Psoas muscle (tissue), 8 donors: ENCODE measurements at regions of chr2 and their contacts with region 1.

Region 1: GRCh38 chr2:121530212-121530705 is 421 bp upstream of the RNU4ATAC start:
- DNase-seq: peak; percentile 84 to 92
- ATAC-seq: peak; percentile 77 to 83 (median 78)
- H3K4me3 ChIP-seq: peak overlapping the region; percentile 89
- H3K27ac ChIP-seq: peak overlapping the region; percentile 99
- H3K4me1 ChIP-seq: peaks cover 44% of the 10 kb centered on the region
- H3K27me3 ChIP-seq: no peaks in the 10 kb centered on the region
- CTCF ChIP-seq: no peak

Region 2: DNA sequence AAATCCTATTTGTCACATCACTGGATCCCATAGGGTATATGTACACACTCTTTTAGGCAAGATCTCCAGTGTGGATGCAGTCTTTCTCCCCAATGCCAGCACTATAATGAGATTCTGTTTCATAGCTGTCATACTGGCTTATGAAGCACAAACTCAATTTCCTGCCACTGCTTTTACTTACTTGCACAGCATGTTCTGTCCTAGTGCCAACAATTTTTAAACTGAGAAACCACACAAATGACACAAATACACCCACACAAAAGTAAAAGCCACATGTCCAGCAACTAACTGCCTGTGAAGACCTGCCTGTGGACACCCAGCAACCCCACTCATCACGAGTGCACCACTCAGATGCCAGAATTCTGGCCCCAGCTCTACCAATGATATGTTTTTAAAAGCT is 29.2 kb before region 1 on chr2:
- intact Hi-C with region 1: no loop called
- DNase-seq: no peak
- ATAC-seq: peak in 3 of 4 donors; percentile 37 to 65 (median 42)
- H3K4me3 ChIP-seq: no peak overlapping the region
- H3K27ac ChIP-seq: peak overlapping the region; percentile 63
- H3K4me1 ChIP-seq: peaks cover 58% of the 10 kb centered on the region
- H3K27me3 ChIP-seq: no peaks in the 10 kb centered on the region
- CTCF ChIP-seq: no peak

Region 3: GRCh38 chr2:121565389-121566250 is 35.4 kb after region 1 on chr2:
- intact Hi-C with region 1: loop called (anchors 2 to 5 kb)
- DNase-seq: peak; percentile 37 to 68
- ATAC-seq: peak; percentile 89 to 91 (median 90)
- H3K4me3 ChIP-seq: peak overlapping the region; percentile 43
- H3K27ac ChIP-seq: peak overlapping the region; percentile 84
- H3K4me1 ChIP-seq: peaks cover 95% of the 10 kb centered on the region
- H3K27me3 ChIP-seq: no peaks in the 10 kb centered on the region
- CTCF ChIP-seq: no peak

Region 4: DNA sequence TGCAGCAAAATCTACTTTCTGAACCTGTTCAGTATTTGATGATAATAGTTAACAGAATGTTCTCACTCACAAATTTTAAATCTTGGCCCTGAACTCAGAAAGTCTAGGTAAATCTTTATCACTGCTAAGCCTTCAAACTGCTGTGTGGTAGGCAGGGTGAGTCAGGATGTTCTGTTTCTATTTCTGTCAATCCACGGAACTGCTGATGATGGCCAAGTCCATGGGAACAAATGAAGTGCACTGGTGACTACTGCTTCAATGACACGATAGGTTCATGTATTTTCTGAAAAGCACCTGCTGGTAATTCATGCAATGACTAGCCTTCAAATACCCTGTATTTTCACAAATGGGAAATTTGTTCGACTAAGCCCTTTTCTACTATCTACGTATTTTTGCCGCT is 192.2 kb after region 1 on chr2:
- intact Hi-C with region 1: loop called (anchors 2 to 5 kb)
- DNase-seq: no peak
- ATAC-seq: peak; percentile 85 to 93 (median 92)
- H3K4me3 ChIP-seq: no peak overlapping the region
- H3K27ac ChIP-seq: peak overlapping the region; percentile 75
- H3K4me1 ChIP-seq: peaks cover 19% of the 10 kb centered on the region
- H3K27me3 ChIP-seq: no peaks in the 10 kb centered on the region
- CTCF ChIP-seq: no peak

Region 5: DNA sequence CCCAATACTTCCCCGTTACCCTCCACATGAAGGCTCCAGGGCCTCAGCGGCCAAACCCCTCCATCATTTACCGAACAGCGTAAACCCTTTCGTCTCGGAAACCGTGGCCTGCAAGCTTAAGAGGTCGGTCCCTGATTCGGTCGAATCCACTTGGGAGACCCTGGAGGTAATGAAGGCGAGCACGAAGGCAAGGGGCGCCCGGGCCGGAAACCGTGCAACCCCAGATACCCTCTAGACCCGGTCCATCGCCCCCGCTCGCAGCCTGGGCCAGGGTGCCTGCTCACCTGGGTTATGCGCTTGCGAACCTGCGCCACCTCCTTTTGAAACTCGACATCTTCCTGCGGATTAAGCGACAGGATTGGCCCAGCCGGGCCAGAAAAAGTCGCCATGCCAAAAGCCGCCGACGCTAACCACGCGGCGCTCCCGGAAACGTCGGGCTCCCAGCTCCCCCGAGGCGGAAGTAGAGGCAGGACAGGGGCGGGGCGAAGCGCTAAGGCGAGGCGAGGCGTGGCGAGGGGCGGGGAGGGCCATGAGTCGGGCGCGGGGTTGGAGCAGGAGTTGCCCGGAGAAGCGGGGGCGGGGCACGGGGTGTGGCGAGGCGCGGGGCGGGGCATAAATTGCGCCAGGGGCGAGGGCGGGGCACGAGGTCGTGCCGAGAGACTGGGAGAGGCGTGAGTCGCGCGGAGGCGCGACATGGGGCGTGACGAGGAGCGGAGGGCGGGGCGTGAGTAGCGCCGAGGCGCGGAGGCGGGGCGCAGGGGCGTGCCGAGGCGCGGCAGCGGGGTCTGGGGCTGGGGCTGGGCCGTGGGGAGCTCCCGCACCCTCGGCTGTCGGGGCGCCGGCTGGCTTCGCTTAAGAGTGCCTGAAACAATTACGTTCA is 206.4 kb after region 1 on chr2 and contains the start of gene NIFK:
- intact Hi-C with region 1: loop called in 1 of 2 experiments (anchors 5 kb)
- DNase-seq: peak; percentile 100
- ATAC-seq: peak; percentile 98
- H3K4me3 ChIP-seq: peak within 1 kb of the TSS; percentile 99
- H3K27ac ChIP-seq: peak within 1 kb of the TSS; percentile 95
- H3K4me1 ChIP-seq: peaks cover 4% of the 10 kb centered on the region
- H3K27me3 ChIP-seq: no peaks in the 10 kb centered on the region
- CTCF ChIP-seq: no peak
- total RNA-seq, gene NIFK: 46.5 to 74.3 (median 56.6) TPM

Region 6: DNA sequence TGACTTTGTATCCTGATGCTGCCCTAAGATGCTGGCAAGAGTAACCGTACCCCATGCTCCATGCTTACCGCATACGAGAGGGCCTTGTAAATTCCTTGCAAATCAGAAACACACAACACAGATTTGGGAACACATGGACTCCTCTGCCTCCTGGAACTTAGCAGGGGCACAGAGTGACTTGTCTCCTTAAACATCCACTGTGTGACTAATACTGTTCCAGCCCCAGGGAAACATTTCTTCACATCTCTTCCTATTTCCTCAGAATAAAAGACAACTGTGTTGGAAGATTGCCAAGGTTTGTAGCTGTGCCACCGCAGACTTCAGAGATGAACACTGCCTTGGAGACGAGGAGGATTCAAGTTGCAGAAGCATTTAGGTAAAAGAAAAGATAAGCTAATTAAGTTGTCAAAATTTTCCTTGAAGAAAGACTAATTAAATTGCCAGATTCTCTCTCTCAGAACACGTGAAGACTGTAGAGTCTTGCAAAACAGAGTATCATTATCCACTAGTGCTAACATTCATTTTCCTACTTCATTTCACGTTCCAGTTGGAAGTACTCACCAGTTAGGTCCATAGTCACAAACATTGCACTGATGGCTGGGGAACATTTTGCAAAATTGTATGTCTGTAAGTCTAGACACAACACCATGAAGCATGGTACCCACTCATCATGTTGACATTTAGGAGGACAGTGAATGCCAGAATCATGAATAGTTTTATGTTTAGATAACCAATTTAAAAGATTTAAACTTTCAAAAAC is 414.0 kb after region 1 on chr2:
- intact Hi-C with region 1: no loop called
- DNase-seq: peak in 1 of 2 donors; percentile 17
- ATAC-seq: peak in 3 of 4 donors; percentile 56 to 76 (median 73)
- H3K4me3 ChIP-seq: no peak overlapping the region
- H3K27ac ChIP-seq: no peak overlapping the region
- H3K4me1 ChIP-seq: no peaks in the 10 kb centered on the region
- H3K27me3 ChIP-seq: no peaks in the 10 kb centered on the region
- CTCF ChIP-seq: no peak